Activated CD4-positive, alpha-beta T cell treated with anti-CD3 and anti-CD28 coated beads for 36 hours (primary cell): ENCODE measurements at regions of chr22 and their contacts with region 1.

Region 1: GRCh38 chr22:18110194-18110953 is at the start of gene TUBA8:
- DNase-seq: peak; percentile 68
- ATAC-seq: peak; percentile 62
- H3K4me3 Mint-ChIP-seq: peak within 1 kb of the TSS; percentile 46
- H3K27ac Mint-ChIP-seq: no peak within 1 kb of the TSS
- H3K4me1 Mint-ChIP-seq: peaks cover 51% of the 10 kb centered on the region
- H3K27me3 Mint-ChIP-seq: peaks cover 39% of the 10 kb centered on the region
- total RNA-seq, gene TUBA8: 1.9 to 2.6 TPM

Region 2: GRCh38 chr22:18091916-18092526 is 18.4 kb before region 1 on chr22:
- CTCF ChIA-PET with region 1: no interaction called
- POLR2A ChIA-PET with region 1: interaction called, 4 read pairs
- intact Hi-C with region 1: loop called (anchors 1 kb)
- DNase-seq: peak; percentile 59
- ATAC-seq: peak; percentile 61
- H3K4me3 Mint-ChIP-seq: peak overlapping the region; percentile 57
- H3K27ac Mint-ChIP-seq: peak overlapping the region; percentile 80
- H3K4me1 Mint-ChIP-seq: peaks cover 65% of the 10 kb centered on the region
- H3K27me3 Mint-ChIP-seq: no peaks in the 10 kb centered on the region

Region 3: DNA sequence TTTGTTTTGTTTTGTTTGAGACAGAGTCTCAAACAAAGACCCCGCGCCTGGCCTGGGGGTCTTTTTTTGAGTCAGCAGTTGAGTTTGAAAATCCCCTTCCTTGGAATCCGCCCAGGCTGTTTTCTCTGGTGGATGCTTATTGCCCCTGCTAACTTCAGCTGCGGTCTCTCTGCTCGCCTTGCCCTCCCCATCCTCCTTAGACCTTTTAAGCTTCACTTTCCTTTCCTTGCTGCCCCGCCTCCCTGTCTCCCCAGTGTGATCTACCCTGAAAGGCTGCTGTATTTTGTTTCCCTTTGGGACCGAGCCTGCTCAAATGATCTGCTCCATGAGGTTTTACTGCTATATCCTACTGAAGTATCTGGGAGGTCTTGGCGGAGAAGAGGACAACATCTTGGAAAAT is 42.1 kb after region 1 on chr22:
- CTCF ChIA-PET with region 1: no interaction called
- POLR2A ChIA-PET with region 1: interaction called, 4 read pairs
- intact Hi-C with region 1: loop called (anchors 2 to 5 kb)
- DNase-seq: peak; percentile 62
- ATAC-seq: peak; percentile 52
- H3K4me3 Mint-ChIP-seq: peak overlapping the region; percentile 73
- H3K27ac Mint-ChIP-seq: peak overlapping the region; percentile 73
- H3K4me1 Mint-ChIP-seq: peaks cover 35% of the 10 kb centered on the region
- H3K27me3 Mint-ChIP-seq: no peaks in the 10 kb centered on the region